MCF 10A (cell line): ENCODE measurements at regions of chr1 and their contacts with region 1.

Region 1: GRCh38 chr1:160124705-160125478 is 9.3 kb downstream of the ATP1A2 start:
- DNase-seq: peak; percentile 94
- H3K4me3 Mint-ChIP-seq: no peak overlapping the region
- H3K27ac Mint-ChIP-seq: peak overlapping the region; percentile 93
- H3K4me1 Mint-ChIP-seq: peaks cover 41% of the 10 kb centered on the region
- H3K27me3 Mint-ChIP-seq: no peaks in the 10 kb centered on the region
- CTCF ChIP-seq: peak; percentile 36

Region 2: GRCh38 chr1:160108888-160109662 is 15.8 kb before region 1 on chr1:
- CTCF ChIA-PET with region 1: interaction called, 69 read pairs
- POLR2A ChIA-PET with region 1: interaction called, 6 read pairs
- intact Hi-C with region 1: no loop called
- DNase-seq: peak; percentile 88
- H3K4me3 Mint-ChIP-seq: no peak overlapping the region
- H3K27ac Mint-ChIP-seq: no peak overlapping the region
- H3K4me1 Mint-ChIP-seq: peaks cover 12% of the 10 kb centered on the region
- H3K27me3 Mint-ChIP-seq: no peaks in the 10 kb centered on the region
- CTCF ChIP-seq: peak; percentile 52

Region 3: GRCh38 chr1:160149716-160150115 is 24.8 kb after region 1 on chr1:
- CTCF ChIA-PET with region 1: interaction called, 15 read pairs
- POLR2A ChIA-PET with region 1: interaction called, 3 read pairs
- intact Hi-C with region 1: loop called (anchors 2 kb)
- DNase-seq: peak; percentile 20
- H3K4me3 Mint-ChIP-seq: no peak overlapping the region
- H3K27ac Mint-ChIP-seq: peak overlapping the region; percentile 71
- H3K4me1 Mint-ChIP-seq: peaks cover 18% of the 10 kb centered on the region
- H3K27me3 Mint-ChIP-seq: no peaks in the 10 kb centered on the region
- CTCF ChIP-seq: no peak

Region 4: DNA sequence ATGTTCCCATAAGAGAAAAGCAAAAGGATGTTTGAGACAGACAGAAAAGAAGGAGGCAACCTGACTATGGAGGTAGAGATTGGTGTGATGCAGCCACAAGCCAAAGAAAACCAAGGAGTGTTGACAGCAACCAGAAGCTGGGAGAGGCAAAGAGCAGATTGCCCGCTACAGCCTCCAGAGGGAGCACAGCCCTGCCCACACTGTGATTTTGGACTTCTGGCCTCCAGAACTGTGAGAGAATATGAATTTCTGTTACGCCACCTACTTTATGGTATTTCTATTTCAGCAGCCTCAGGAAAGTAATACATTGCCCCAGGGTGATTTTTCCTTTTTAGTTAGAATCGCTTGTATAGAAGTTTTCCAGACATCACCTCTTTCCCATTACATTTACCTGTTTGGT is 369.7 kb after region 1 on chr1:
- CTCF ChIA-PET with region 1: no interaction called
- POLR2A ChIA-PET with region 1: no interaction called
- intact Hi-C with region 1: no loop called
- DNase-seq: peak; percentile 35
- H3K4me3 Mint-ChIP-seq: no peak overlapping the region
- H3K27ac Mint-ChIP-seq: no peak overlapping the region
- H3K4me1 Mint-ChIP-seq: no peaks in the 10 kb centered on the region
- H3K27me3 Mint-ChIP-seq: peaks cover 9% of the 10 kb centered on the region
- CTCF ChIP-seq: peak; percentile 31